Activated CD4-positive, alpha-beta T cell treated with anti-CD3 and anti-CD28 coated beads for 36 hours (primary cell): ENCODE measurements at regions of chr3 and their contacts with region 1.

Region 1: GRCh38 chr3:154120961-154121700 is at the start of gene ARHGEF26:
- DNase-seq: peak; percentile 88
- ATAC-seq: peak; percentile 70
- H3K4me3 Mint-ChIP-seq: peak within 1 kb of the TSS; percentile 69
- H3K27ac Mint-ChIP-seq: no peak within 1 kb of the TSS
- H3K4me1 Mint-ChIP-seq: peaks cover 22% of the 10 kb centered on the region
- H3K27me3 Mint-ChIP-seq: peaks cover 63% of the 10 kb centered on the region
- total RNA-seq, gene ARHGEF26: 0.14 to 0.16 TPM

Region 2: GRCh38 chr3:152760024-152760563 is 1361.0 kb before region 1 on chr3:
- CTCF ChIA-PET with region 1: no interaction called
- POLR2A ChIA-PET with region 1: no interaction called
- intact Hi-C with region 1: no loop called
- DNase-seq: no peak
- ATAC-seq: no peak
- H3K4me3 Mint-ChIP-seq: no peak overlapping the region
- H3K27ac Mint-ChIP-seq: no peak overlapping the region
- H3K4me1 Mint-ChIP-seq: no peaks in the 10 kb centered on the region
- H3K27me3 Mint-ChIP-seq: no peaks in the 10 kb centered on the region

Region 3: DNA sequence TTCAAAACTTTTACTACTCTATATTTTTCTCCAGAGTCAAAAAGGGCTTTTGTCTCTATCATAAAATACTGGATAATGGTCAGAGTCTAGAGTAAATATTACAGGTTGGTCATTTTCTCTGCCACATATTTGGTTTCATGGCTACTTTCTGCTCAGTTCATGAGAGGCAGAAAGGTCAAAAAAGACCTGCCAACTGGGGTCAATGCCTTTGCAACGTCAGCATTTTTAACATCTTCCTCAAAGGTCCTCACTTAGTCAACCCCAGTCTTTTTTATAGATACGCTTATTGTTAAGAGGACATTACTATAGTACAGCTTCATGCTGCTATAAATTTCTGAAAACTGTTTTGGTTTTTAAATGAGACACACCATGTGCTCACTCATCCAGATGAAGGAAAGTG is 312.0 kb before region 1 on chr3:
- CTCF ChIA-PET with region 1: no interaction called
- POLR2A ChIA-PET with region 1: no interaction called
- intact Hi-C with region 1: no loop called
- DNase-seq: no peak
- ATAC-seq: no peak
- H3K4me3 Mint-ChIP-seq: no peak overlapping the region
- H3K27ac Mint-ChIP-seq: no peak overlapping the region
- H3K4me1 Mint-ChIP-seq: no peaks in the 10 kb centered on the region
- H3K27me3 Mint-ChIP-seq: peaks cover 12% of the 10 kb centered on the region

Region 4: DNA sequence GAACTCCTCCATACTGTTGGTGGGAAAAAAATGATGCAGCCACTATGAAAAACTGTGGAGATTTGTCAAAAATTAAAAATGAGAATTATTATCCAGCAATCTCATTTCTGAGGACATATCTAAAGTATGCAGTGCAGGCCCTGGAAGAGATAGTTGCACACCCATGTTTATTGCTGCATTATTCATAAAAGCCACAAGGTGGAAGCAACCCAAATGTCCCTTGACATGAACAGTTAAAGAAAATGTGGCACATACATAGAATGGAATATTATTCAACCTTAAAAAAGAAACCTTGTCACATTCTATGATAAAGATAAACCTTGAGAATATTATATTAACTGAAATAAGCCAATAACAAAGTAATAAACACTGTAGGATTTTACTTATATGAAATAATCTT is 80.8 kb before region 1 on chr3:
- CTCF ChIA-PET with region 1: no interaction called
- POLR2A ChIA-PET with region 1: no interaction called
- intact Hi-C with region 1: no loop called
- DNase-seq: no peak
- ATAC-seq: peak; percentile 44
- H3K4me3 Mint-ChIP-seq: no peak overlapping the region
- H3K27ac Mint-ChIP-seq: no peak overlapping the region
- H3K4me1 Mint-ChIP-seq: no peaks in the 10 kb centered on the region
- H3K27me3 Mint-ChIP-seq: no peaks in the 10 kb centered on the region

Region 5: GRCh38 chr3:154235330-154235729 is 114.2 kb after region 1 on chr3:
- CTCF ChIA-PET with region 1: no interaction called
- POLR2A ChIA-PET with region 1: no interaction called
- intact Hi-C with region 1: loop called in 1 of 2 experiments (anchors 5 kb)
- DNase-seq: no peak
- ATAC-seq: no peak
- H3K4me3 Mint-ChIP-seq: no peak overlapping the region
- H3K27ac Mint-ChIP-seq: no peak overlapping the region
- H3K4me1 Mint-ChIP-seq: peaks cover 12% of the 10 kb centered on the region
- H3K27me3 Mint-ChIP-seq: peaks cover 26% of the 10 kb centered on the region

Region 6: GRCh38 chr3:154323891-154324738 is 203.0 kb after region 1 on chr3 and contains the start of gene DHX36:
- CTCF ChIA-PET with region 1: no interaction called
- POLR2A ChIA-PET with region 1: no interaction called
- intact Hi-C with region 1: loop called in 1 of 2 experiments (anchors 2 kb)
- DNase-seq: peak; percentile 93
- ATAC-seq: peak; percentile 91
- H3K4me3 Mint-ChIP-seq: peak within 1 kb of the TSS; percentile 85
- H3K27ac Mint-ChIP-seq: peak within 1 kb of the TSS; percentile 97
- H3K4me1 Mint-ChIP-seq: peaks cover 25% of the 10 kb centered on the region
- H3K27me3 Mint-ChIP-seq: no peaks in the 10 kb centered on the region
- total RNA-seq, gene DHX36: 56.3 to 74.6 TPM